ENCODE measurements at regions of chr17 and their contacts with region 1.

Region 1: GRCh38 chr17:43360739-43361505 is 37.9 kb upstream of the ARL4D start:
- DNase-seq: peak; percentile 100
- ATAC-seq: peak; percentile 96
- H3K4me3 ChIP-seq: peak overlapping the region; percentile 73
- H3K27ac ChIP-seq: peak overlapping the region; percentile 93
- H3K4me1 ChIP-seq: no peaks in the 10 kb centered on the region
- H3K27me3 ChIP-seq: no peaks in the 10 kb centered on the region
- CTCF ChIP-seq: peak in 1 of 3 experiments; percentile 2; a peak in 1 of 6 replicates
- EP300 ChIP-seq: peak in 1 of 2 experiments; percentile 66; a peak in 2 of 4 replicates
- POLR2A ChIP-seq: peak; percentile 99
- RAD21 ChIP-seq: 0 out of 2 replicates have a peak, but pooled peaks have one; percentile 6

Region 2: DNA sequence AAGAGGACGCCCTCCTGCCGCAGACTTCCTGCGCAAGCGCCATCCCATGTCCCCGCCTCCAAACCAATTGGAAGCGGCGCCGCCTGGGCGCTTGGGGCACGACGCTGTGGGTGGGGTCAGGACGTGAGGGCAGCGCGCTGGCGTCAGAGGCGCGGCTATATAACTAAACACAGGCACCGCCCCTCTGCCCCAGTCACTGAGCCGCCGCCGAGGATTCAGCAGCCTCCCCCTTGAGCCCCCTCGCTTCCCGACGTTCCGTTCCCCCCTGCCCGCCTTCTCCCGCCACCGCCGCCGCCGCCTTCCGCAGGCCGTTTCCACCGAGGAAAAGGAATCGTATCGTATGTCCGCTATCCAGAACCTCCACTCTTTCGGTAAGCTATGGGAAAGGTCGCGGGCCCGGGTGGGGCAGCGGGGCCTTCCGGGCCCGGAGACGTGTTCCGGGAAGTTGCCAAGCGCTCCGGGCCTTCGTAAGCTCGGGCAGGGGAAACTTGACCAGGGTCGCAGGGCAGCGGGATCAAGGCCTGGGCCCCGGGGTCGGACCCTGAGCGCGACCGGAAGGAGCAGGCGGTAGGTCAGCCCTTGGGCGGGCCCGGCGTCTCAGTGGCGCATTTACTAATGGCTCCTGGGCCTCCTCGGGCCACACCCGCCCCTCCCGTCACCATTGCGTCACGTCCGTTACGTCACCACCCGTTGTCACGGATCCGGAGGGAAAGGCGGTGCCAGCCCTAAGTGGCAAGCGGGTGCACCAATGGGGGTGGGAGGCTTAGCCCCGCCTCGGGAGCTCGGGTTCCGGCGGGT is 1672.0 kb before region 1 on chr17 and contains the start of gene EIF1:
- CTCF ChIA-PET with region 1: no interaction called
- POLR2A ChIA-PET with region 1: no interaction called
- RAD21 ChIA-PET with region 1: no interaction called
- SMC1A ChIA-PET with region 1: no interaction called
- in situ Hi-C with region 1: loop called (anchors 25 kb)
- intact Hi-C with region 1: no loop called
- DNase-seq: peak; percentile 98
- ATAC-seq: peak; percentile 85
- H3K4me3 ChIP-seq: peak within 1 kb of the TSS; percentile 87
- H3K27ac ChIP-seq: peak within 1 kb of the TSS; percentile 100
- H3K4me1 ChIP-seq: peaks cover 11% of the 10 kb centered on the region
- H3K27me3 ChIP-seq: no peaks in the 10 kb centered on the region
- CTCF ChIP-seq: no peak
- EP300 ChIP-seq: 0 out of 4 replicates have a peak, but pooled peaks of 1 of the 2 experiments have one; percentile 17
- POLR2A ChIP-seq: peak; percentile 98
- RAD21 ChIP-seq: no peak
- polyA plus RNA-seq, gene EIF1: 670 to 687 TPM

Region 3: DNA sequence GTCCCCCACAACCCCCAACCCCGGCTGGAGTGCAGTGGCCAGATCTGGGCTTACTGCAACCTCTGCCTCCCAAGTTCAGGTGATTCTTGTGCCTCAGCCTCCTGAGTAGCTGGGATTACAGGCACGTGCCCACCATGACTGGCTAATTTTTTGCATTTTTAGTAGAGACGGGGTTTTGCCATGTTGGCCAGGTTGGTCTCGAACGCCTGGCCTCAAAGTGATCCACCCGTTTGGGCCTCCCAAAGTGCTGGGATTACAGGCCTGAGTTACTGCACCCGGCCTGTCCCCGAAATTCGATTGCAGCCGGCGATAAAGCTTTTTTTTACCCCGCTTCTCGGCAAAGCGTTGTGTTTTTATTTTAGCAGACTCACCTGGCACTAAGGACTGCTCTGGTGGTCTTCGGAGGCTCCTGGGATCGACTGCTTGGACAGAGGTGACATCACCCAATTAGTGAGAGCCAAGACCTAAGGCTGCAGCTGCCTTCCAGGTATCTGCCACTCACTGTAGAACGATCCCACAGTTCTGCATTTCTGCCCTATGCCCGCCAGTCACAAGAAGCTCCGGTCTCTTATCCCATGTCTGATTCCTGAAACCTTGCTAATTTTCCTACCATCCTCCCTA is 44.3 kb before region 1 on chr17:
- CTCF ChIA-PET with region 1: no interaction called
- POLR2A ChIA-PET with region 1: interaction called, 13 read pairs
- RAD21 ChIA-PET with region 1: interaction called, 10 read pairs
- SMC1A ChIA-PET with region 1: no interaction called
- in situ Hi-C with region 1: no loop called
- intact Hi-C with region 1: loop called (anchors 1 kb)
- DNase-seq: no peak
- ATAC-seq: no peak
- H3K4me3 ChIP-seq: no peak overlapping the region
- H3K27ac ChIP-seq: no peak overlapping the region
- H3K4me1 ChIP-seq: peaks cover 5% of the 10 kb centered on the region; the same call in 1 of the 2 replicates
- H3K27me3 ChIP-seq: no peaks in the 10 kb centered on the region
- CTCF ChIP-seq: no peak
- EP300 ChIP-seq: no peak
- POLR2A ChIP-seq: no peak
- RAD21 ChIP-seq: no peak

Region 4: DNA sequence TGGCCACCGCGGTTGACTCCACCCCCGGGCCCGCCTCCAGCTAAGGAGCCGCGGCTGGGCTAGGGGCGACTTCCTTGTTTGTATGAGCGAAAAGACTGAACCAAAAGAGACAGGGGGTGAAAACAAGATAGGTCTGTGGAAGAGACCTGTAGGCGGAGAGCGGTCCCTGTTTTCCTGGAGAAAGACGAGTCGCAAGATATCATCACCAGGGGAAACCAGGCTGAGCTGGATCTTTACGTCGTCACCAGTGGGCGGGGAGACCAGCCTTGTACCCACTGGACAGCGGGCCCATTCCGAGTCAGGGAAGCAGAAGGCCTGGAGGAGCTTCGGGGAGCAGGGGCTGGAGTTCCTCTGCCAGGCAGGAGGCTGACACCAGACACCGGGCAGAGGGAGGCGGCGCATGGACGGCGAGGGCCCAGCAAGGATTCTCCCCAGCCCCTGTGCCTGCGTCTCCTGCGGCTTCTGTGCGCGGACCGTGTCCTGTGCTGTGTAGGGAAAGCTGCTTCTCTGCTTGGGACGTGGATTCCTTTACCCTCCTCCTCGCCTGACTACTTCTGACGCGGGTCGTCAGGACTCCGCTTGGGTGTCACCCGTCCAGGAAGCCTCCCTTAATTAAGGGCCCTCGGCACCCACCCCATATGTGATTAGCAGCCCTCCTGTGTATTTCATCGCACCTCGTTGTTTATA is 27.6 kb after region 1 on chr17:
- CTCF ChIA-PET with region 1: interaction called, 4 read pairs
- POLR2A ChIA-PET with region 1: interaction called, 9 read pairs
- RAD21 ChIA-PET with region 1: interaction called, 14 read pairs
- SMC1A ChIA-PET with region 1: interaction called, 4 read pairs
- in situ Hi-C with region 1: no loop called
- intact Hi-C with region 1: no loop called
- DNase-seq: peak; percentile 75
- ATAC-seq: peak; percentile 90
- H3K4me3 ChIP-seq: peak overlapping the region; percentile 70
- H3K27ac ChIP-seq: peak overlapping the region; percentile 97
- H3K4me1 ChIP-seq: peaks cover 4% of the 10 kb centered on the region
- H3K27me3 ChIP-seq: no peaks in the 10 kb centered on the region
- CTCF ChIP-seq: no peak
- EP300 ChIP-seq: peak in 1 of 2 experiments; percentile 15; a peak in 1 of 4 replicates
- POLR2A ChIP-seq: peak; percentile 79
- RAD21 ChIP-seq: no peak